ENCODE measurements at regions of chr1 and their contacts with region 1.

Region 1: GRCh38 chr1:204398217-204399081 is 13.2 kb downstream of the PPP1R15B start:
- DNase-seq: peak; percentile 80
- H3K4me3 ChIP-seq: no peak overlapping the region
- H3K27ac ChIP-seq: no peak overlapping the region
- H3K4me1 ChIP-seq: no peaks in the 10 kb centered on the region
- H3K27me3 ChIP-seq: no peaks in the 10 kb centered on the region
- CTCF ChIP-seq: peak; percentile 80 to 86
- POLR2A ChIP-seq: no peak

Region 2: GRCh38 chr1:204213668-204214662 is 184.5 kb before region 1 on chr1 and contains the start of gene GOLT1A:
- CTCF ChIA-PET with region 1: interaction called, 106 read pairs
- POLR2A ChIA-PET with region 1: no interaction called
- dilution Hi-C with region 1: no loop called
- intact Hi-C with region 1: loop called (anchors 1 kb)
- DNase-seq: peak; percentile 75
- H3K4me3 ChIP-seq: no peak within 1 kb of the TSS
- H3K27ac ChIP-seq: no peak within 1 kb of the TSS
- H3K4me1 ChIP-seq: no peaks in the 10 kb centered on the region
- H3K27me3 ChIP-seq: no peaks in the 10 kb centered on the region
- CTCF ChIP-seq: peak; percentile 75
- POLR2A ChIP-seq: no peak
- total RNA-seq, gene GOLT1A: not detected in 2 replicates

Region 3: DNA sequence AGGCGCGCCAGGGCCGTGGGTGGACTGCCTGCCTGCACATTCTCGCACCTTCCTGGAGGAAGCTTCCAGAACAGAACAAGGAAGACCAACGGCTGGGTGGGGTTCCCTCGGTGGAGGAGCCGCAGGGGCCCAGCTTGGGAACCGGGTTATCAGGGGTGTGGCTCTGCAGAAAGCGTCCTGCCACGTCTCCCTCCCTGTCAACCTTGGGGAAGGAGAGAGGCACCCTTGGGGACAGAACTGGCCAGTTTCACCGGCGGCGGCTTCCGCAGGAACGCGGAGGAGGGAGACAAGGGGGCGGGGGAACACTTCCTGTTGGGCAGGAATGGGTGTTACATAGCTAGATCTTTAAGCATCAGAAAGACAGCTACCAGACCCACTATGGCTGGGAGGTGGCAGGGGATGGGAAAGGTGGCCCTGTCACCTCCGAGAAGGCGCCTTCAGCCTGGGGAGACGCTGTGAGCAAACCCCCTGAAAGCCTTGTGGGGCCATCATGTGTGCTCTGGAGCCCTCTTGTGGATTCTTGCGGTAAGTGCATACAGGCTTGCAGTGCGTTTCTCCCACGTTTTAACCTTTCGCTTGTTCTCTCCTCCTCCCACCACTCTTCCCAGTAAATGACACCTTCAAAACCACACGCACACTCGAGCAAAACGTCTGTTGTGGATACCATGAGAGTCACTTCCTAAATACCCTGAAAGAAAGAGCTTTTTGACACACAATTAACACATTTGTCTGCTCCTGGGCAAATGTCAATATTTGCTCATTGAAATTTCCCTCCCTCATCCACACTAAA is 34.9 kb before region 1 on chr1:
- CTCF ChIA-PET with region 1: interaction called, 81 read pairs
- POLR2A ChIA-PET with region 1: interaction called, 4 read pairs
- dilution Hi-C with region 1: no loop called
- intact Hi-C with region 1: loop called (anchors 1 kb)
- DNase-seq: peak; percentile 83
- H3K4me3 ChIP-seq: peak overlapping the region in 2 of 3 experiments; percentile 30 to 35
- H3K27ac ChIP-seq: no peak overlapping the region
- H3K4me1 ChIP-seq: peaks cover 53% of the 10 kb centered on the region
- H3K27me3 ChIP-seq: no peaks in the 10 kb centered on the region
- CTCF ChIP-seq: peak; percentile 93 to 94
- POLR2A ChIP-seq: no peak

Region 4: GRCh38 chr1:204411451-204412204 is 13.2 kb after region 1 on chr1 and contains the start of gene PPP1R15B:
- CTCF ChIA-PET with region 1: interaction called, 77 read pairs
- POLR2A ChIA-PET with region 1: no interaction called
- dilution Hi-C with region 1: no loop called
- intact Hi-C with region 1: loop called (anchors 1 kb)
- DNase-seq: peak; percentile 99
- H3K4me3 ChIP-seq: peak within 1 kb of the TSS; percentile 49 to 94 (median 78)
- H3K27ac ChIP-seq: peak within 1 kb of the TSS; percentile 89
- H3K4me1 ChIP-seq: peaks cover 6% of the 10 kb centered on the region
- H3K27me3 ChIP-seq: no peaks in the 10 kb centered on the region
- CTCF ChIP-seq: no peak
- POLR2A ChIP-seq: peak; percentile 96
- total RNA-seq, gene PPP1R15B: 39.8 and 41.7 TPM in 2 replicates

Region 5: DNA sequence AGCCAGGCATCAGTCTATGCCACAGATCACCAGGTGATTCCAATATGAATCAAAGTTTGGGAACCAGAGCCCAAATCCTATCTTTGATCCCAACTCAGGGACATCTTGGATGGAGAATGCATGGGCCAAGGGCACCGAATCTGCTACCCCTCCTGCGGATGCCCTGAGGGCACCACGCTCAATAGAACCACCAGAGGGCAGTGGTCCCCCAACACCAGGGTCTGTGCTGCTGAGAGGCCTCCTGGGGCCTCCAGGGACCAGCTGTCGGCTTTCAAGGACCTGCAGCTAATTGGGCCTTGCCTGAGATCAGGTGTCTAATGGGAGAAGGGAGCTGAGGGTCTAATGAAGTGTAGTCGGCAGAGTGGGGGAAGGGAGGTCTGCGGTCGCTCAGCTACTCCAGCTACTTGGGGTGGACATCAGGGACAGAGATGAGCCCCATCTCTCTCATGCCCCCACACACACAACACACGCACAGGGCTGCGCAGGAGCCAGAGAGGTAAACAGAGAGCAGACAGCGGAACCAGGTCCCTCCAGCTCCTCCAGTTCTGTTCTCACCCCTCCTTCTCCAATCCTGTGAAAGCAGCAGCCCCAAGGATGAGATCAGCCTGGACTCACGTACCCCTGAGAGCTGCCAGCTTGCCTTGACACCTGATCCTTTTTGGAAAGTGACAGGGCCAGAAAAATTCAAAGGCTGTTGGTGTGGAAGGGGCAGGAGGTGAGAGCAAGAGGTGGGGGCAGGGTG is 48.1 kb after region 1 on chr1:
- CTCF ChIA-PET with region 1: interaction called, 13 read pairs
- POLR2A ChIA-PET with region 1: no interaction called
- dilution Hi-C with region 1: no loop called
- intact Hi-C with region 1: no loop called
- DNase-seq: peak; percentile 65
- H3K4me3 ChIP-seq: no peak overlapping the region
- H3K27ac ChIP-seq: no peak overlapping the region
- H3K4me1 ChIP-seq: peaks cover 9% of the 10 kb centered on the region
- H3K27me3 ChIP-seq: no peaks in the 10 kb centered on the region
- CTCF ChIP-seq: peak; percentile 73 to 82
- POLR2A ChIP-seq: no peak

Region 6: GRCh38 chr1:204544321-204544720 is 145.9 kb after region 1 on chr1:
- CTCF ChIA-PET with region 1: no interaction called
- POLR2A ChIA-PET with region 1: no interaction called
- dilution Hi-C with region 1: no loop called
- intact Hi-C with region 1: no loop called
- DNase-seq: peak; percentile 41
- H3K4me3 ChIP-seq: no peak overlapping the region
- H3K27ac ChIP-seq: no peak overlapping the region
- H3K4me1 ChIP-seq: peaks cover 12% of the 10 kb centered on the region
- H3K27me3 ChIP-seq: no peaks in the 10 kb centered on the region
- CTCF ChIP-seq: no peak
- POLR2A ChIP-seq: no peak

Region 7: DNA sequence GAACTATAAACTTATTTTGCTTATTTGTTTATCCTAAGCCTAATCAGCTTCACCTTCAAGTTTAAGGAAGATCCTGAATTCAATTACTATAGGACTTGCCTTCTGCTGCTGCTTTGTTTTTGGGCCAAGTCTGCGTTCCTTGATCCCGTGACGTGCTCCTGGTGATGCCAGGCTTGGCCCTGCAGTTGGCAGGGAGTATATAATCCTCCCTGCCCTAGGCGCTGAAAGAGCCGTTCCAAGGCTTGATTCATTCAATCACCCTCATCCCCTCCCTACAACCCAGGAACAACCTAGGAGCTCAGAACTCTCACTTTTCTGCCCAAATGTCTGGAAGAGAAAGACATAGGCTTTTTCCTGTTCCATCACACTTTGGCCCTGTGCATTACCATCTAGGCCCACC is 299.4 kb after region 1 on chr1:
- CTCF ChIA-PET with region 1: no interaction called
- POLR2A ChIA-PET with region 1: no interaction called
- dilution Hi-C with region 1: no loop called
- intact Hi-C with region 1: no loop called
- DNase-seq: no peak
- H3K4me3 ChIP-seq: no peak overlapping the region
- H3K27ac ChIP-seq: no peak overlapping the region
- H3K4me1 ChIP-seq: no peaks in the 10 kb centered on the region
- H3K27me3 ChIP-seq: peaks cover 0 to 2% of the 10 kb centered on the region in 2 experiments
- CTCF ChIP-seq: no peak
- POLR2A ChIP-seq: no peak